ENCODE measurements at regions of chr6 and their contacts with region 1.

Region 1: DNA sequence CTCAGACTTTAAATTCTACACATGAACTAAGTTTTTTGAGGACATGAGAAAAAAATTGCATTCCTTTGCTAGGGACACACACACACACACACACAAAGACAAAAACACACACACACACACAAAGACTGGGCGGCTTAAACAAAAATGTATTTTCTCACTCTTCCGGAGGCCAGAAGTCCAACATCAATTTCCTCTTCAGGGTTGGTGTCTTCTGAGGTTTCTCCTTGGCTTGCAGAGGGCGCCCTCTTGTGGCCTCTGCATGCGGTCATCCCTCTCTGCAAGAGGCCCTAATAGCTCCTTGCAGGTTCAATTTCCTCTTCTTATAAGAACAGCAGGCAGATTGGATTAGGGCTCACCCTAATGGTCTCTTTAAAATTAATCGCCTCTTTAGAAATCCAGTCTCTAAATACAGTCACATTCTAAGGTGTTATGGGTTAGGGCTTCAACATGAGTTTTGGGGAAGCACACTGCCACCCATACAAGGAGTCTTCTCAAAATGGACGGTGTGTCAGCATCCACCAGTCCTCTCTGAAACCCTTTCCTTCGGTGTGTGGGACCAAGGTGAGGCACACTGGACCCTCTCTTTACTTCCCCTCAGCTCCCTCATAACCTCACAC is 61.4 kb downstream of the GPR6 start:
- DNase-seq: peak; percentile 92
- H3K4me3 ChIP-seq: peak overlapping the region; percentile 30 to 32 (median 30)
- H3K27ac ChIP-seq: no peak overlapping the region
- H3K4me1 ChIP-seq: peaks cover 0 to 11% (median 6%) of the 10 kb centered on the region in 4 donors
- H3K27me3 ChIP-seq: no peaks in the 10 kb centered on the region
- CTCF ChIP-seq: peak; percentile 78 to 88 (median 83)
- EP300 ChIP-seq: no peak
- POLR2A ChIP-seq: no peak

Region 2: GRCh38 chr6:109531446-109531845 is 508.0 kb before region 1 on chr6:
- intact Hi-C with region 1: loop called (anchors 5 kb)
- DNase-seq: no peak
- H3K4me3 ChIP-seq: no peak overlapping the region
- H3K27ac ChIP-seq: no peak overlapping the region
- H3K4me1 ChIP-seq: peaks cover 0 to 15% (median 11%) of the 10 kb centered on the region in 4 donors
- H3K27me3 ChIP-seq: no peaks in the 10 kb centered on the region
- CTCF ChIP-seq: no peak
- EP300 ChIP-seq: no peak
- POLR2A ChIP-seq: no peak

Region 3: GRCh38 chr6:109705258-109705657 is 334.2 kb before region 1 on chr6:
- intact Hi-C with region 1: loop called (anchors 2 kb)
- DNase-seq: no peak
- H3K4me3 ChIP-seq: no peak overlapping the region
- H3K27ac ChIP-seq: no peak overlapping the region
- H3K4me1 ChIP-seq: peaks cover 3 to 20% (median 4%) of the 10 kb centered on the region in 4 donors
- H3K27me3 ChIP-seq: no peaks in the 10 kb centered on the region
- CTCF ChIP-seq: peak; percentile 91 to 93 (median 93)
- EP300 ChIP-seq: no peak
- POLR2A ChIP-seq: no peak

Region 4: DNA sequence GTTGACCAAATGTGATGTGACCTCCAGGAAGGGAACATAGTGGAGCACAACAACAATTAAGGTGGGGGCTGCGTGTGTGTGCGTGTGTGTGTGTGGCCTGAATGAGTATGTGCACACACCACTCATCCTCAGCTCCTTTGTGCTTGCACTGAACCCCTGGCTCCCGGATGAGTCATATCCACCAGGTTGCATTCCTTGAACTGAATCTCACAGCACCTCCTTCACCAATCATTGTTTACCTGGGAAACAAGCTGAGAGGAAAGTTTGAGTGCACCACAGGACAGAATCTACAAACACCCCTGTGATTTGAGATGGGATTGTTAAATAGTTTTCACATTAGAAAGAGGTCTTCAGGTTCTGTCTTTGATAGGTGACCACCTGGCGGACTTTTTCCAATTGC is 95.0 kb before region 1 on chr6:
- intact Hi-C with region 1: no loop called
- DNase-seq: no peak
- H3K4me3 ChIP-seq: no peak overlapping the region
- H3K27ac ChIP-seq: no peak overlapping the region
- H3K4me1 ChIP-seq: no peaks in the 10 kb centered on the region
- H3K27me3 ChIP-seq: peaks cover 0 to 16% (median 0%) of the 10 kb centered on the region in 4 donors
- CTCF ChIP-seq: no peak
- EP300 ChIP-seq: no peak
- POLR2A ChIP-seq: no peak

Region 5: GRCh38 chr6:110398778-110399177 is 359.3 kb after region 1 on chr6:
- intact Hi-C with region 1: loop called (anchors 10 kb)
- DNase-seq: no peak
- H3K4me3 ChIP-seq: no peak overlapping the region
- H3K27ac ChIP-seq: no peak overlapping the region
- H3K4me1 ChIP-seq: peaks cover 8 to 18% (median 16%) of the 10 kb centered on the region in 4 donors
- H3K27me3 ChIP-seq: no peaks in the 10 kb centered on the region
- CTCF ChIP-seq: no peak
- EP300 ChIP-seq: no peak
- POLR2A ChIP-seq: no peak

Measured in esophagus muscularis mucosa (tissue), 4 donors.